ENCODE measurements at regions of chr1 and their contacts with region 1.

Region 1: DNA sequence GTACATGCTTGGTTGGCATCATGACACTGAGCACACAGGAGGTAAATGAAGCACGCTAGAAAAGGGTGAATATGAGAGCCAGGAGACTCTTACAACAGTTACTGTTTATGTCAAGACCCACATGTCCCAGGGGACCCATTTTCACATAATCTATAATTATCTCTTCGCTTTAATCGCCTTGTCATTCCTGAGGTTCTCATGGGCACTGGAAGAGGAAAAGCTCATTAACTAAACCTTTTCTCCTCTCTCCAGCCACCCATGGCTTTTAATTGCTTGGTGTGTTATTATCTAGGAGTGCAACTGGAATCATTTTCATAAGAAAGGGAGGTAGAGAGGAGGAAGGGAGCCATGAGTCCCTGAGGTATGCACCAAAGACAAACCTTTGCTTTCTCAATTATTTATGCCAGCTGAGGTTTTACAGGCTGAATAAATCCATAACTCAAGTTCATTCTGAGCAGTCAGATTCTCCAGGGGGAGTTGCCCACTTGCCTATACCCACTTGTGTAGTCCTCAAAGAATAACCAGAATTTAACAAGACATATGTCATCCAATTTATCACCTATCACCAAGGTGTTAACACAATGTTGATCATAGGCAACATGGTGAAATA is 77.4 kb downstream of the ACBD6 start:
- DNase-seq: peak; percentile 28

Region 2: GRCh38 chr1:180092931-180093559 is 331.9 kb before region 1 on chr1:
- CTCF ChIA-PET with region 1: interaction called, 14 read pairs
- POLR2A ChIA-PET with region 1: no interaction called
- DNase-seq: no peak

Region 3: DNA sequence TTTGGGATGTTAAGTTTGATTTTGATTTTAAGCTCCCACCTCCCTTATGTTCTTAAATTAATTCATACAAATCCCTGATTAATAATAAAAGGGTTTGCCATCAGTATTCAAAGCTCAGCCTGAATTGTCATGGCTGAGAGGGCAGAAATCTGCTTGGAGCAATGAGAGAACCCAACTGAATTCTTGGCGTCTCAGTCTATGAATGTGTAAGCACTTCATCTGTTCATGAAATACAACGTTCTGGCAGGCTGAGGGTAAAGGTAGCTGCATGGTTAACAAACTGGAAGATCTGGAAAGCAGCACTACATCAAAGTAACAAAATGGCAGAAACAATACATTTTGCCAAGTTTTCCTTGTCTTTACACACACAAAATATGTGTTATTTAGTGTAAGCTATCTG is 17.9 kb before region 1 on chr1:
- CTCF ChIA-PET with region 1: no interaction called
- POLR2A ChIA-PET with region 1: no interaction called
- DNase-seq: no peak